ENCODE measurements at regions of chrX and their contacts with region 1.

Region 1: GRCh38 chrX:39309018-39309635 is 507.9 kb downstream of the MID1IP1 start:
- DNase-seq: no peak
- H3K4me3 Mint-ChIP-seq: no peak overlapping the region
- H3K27ac Mint-ChIP-seq: peak overlapping the region; percentile 96
- H3K4me1 Mint-ChIP-seq: peaks cover 65% of the 10 kb centered on the region
- H3K27me3 Mint-ChIP-seq: no peaks in the 10 kb centered on the region

Region 2: DNA sequence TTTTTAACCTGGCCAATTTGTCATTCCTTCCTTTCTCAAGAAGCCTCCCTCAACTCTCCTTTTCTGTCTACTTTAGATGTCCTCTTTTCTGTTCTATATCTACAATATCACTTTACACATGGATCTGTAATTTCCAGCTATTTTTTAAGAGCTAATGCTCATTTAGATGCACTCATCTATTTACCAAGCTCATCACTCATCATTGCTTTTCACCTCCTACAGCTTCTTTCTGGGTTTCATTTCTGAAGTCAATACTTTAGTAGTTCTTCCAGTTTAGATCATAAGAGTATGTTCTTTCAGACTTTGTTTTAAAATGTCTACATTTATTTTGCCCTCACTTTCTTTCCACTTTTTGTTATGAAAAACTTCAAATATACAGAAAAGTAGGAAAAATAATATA is 40.9 kb before region 1 on chrX:
- intact Hi-C with region 1: loop called (anchors 1 kb)
- DNase-seq: no peak
- H3K4me3 Mint-ChIP-seq: peak overlapping the region; percentile 54
- H3K27ac Mint-ChIP-seq: peak overlapping the region; percentile 91
- H3K4me1 Mint-ChIP-seq: peaks cover 33% of the 10 kb centered on the region
- H3K27me3 Mint-ChIP-seq: no peaks in the 10 kb centered on the region